ENCODE measurements at regions of chr19 and their contacts with region 1.

Region 1: GRCh38 chr19:36114763-36115452 is at the start of gene POLR2I:
- DNase-seq: peak; percentile 99
- H3K4me3 ChIP-seq: peak within 1 kb of the TSS; percentile 75
- H3K27ac ChIP-seq: peak within 1 kb of the TSS; percentile 68
- H3K4me1 ChIP-seq: peaks cover 13% of the 10 kb centered on the region
- H3K27me3 ChIP-seq: no peaks in the 10 kb centered on the region
- CTCF ChIP-seq: no peak
- total RNA-seq, gene POLR2I: 41.6 to 94.0 TPM

Region 2: GRCh38 chr19:36014029-36014924 is 100.6 kb before region 1 on chr19 and contains the start of gene ALKBH6:
- intact Hi-C with region 1: loop called (anchors 10 kb)
- DNase-seq: peak; percentile 99
- H3K4me3 ChIP-seq: peak within 1 kb of the TSS; percentile 64
- H3K27ac ChIP-seq: peak within 1 kb of the TSS; percentile 19
- H3K4me1 ChIP-seq: peaks cover 4% of the 10 kb centered on the region
- H3K27me3 ChIP-seq: no peaks in the 10 kb centered on the region
- CTCF ChIP-seq: no peak
- total RNA-seq, gene ALKBH6: 17.0 to 26.2 TPM

Region 3: GRCh38 chr19:36054119-36054732 is 60.7 kb before region 1 on chr19 and contains the start of gene THAP8:
- intact Hi-C with region 1: loop called (anchors 10 kb)
- DNase-seq: peak; percentile 100
- H3K4me3 ChIP-seq: peak within 1 kb of the TSS; percentile 70
- H3K27ac ChIP-seq: peak within 1 kb of the TSS; percentile 95
- H3K4me1 ChIP-seq: peaks cover 5% of the 10 kb centered on the region
- H3K27me3 ChIP-seq: no peaks in the 10 kb centered on the region
- CTCF ChIP-seq: peak; percentile 10
- total RNA-seq, gene THAP8: 3.3 to 4.6 TPM

Region 4: GRCh38 chr19:36169084-36169760 is 54.3 kb after region 1 on chr19:
- intact Hi-C with region 1: no loop called
- DNase-seq: peak; percentile 69
- H3K4me3 ChIP-seq: no peak overlapping the region
- H3K27ac ChIP-seq: peak overlapping the region; percentile 88
- H3K4me1 ChIP-seq: no peaks in the 10 kb centered on the region
- H3K27me3 ChIP-seq: no peaks in the 10 kb centered on the region
- CTCF ChIP-seq: no peak